ENCODE measurements at regions of chr3 and their contacts with region 1.

Region 1: GRCh38 chr3:18559331-18559842 is 134.2 kb upstream of the SATB1 start:
- DNase-seq: peak; percentile 7 to 48 (median 28)
- H3K4me3 ChIP-seq: peak overlapping the region; percentile 20
- H3K4me3 Mint-ChIP-seq: peak overlapping the region in 5 of 7 donors; percentile 25 to 59 (median 51)
- H3K27ac ChIP-seq: no peak overlapping the region
- H3K27ac Mint-ChIP-seq: peak overlapping the region in 6 of 8 donors; percentile 22 to 88 (median 78)
- H3K4me1 ChIP-seq: peaks cover 34% of the 10 kb centered on the region
- H3K4me1 Mint-ChIP-seq: peaks cover 30 to 61% (median 47%) of the 10 kb centered on the region in 3 donors
- H3K27me3 ChIP-seq: no peaks in the 10 kb centered on the region
- H3K27me3 Mint-ChIP-seq: no peaks in the 10 kb centered on the region

Region 2: DNA sequence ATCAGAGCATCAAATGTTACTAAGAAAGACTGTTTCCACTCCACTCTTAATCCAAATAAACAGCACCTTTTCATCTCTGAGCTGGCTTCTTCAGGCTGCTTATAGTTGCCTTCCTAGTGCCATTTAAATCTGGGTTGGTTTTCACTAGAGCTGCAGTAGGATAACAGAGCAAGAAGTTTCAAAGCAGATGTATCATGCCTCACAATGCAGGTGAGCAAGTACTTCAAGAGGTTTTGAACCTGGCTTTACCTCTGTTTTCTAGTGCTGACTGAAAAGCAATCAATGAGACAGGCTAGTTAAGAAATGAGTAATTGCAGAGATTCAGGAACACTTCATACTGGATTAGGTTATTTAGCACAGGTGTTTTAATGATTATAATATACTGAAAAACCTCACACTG is 13.4 kb after region 1 on chr3:
- CTCF ChIA-PET with region 1: interaction called, 22 read pairs
- POLR2A ChIA-PET with region 1: no interaction called
- DNase-seq: no peak
- H3K4me3 ChIP-seq: no peak overlapping the region
- H3K4me3 Mint-ChIP-seq: no peak overlapping the region
- H3K27ac ChIP-seq: no peak overlapping the region
- H3K27ac Mint-ChIP-seq: no peak overlapping the region
- H3K4me1 ChIP-seq: no peaks in the 10 kb centered on the region
- H3K4me1 Mint-ChIP-seq: peaks cover 0 to 5% (median 5%) of the 10 kb centered on the region in 3 donors
- H3K27me3 ChIP-seq: no peaks in the 10 kb centered on the region
- H3K27me3 Mint-ChIP-seq: peaks cover 0 to 3% of the 10 kb centered on the region in 2 donors

Region 3: DNA sequence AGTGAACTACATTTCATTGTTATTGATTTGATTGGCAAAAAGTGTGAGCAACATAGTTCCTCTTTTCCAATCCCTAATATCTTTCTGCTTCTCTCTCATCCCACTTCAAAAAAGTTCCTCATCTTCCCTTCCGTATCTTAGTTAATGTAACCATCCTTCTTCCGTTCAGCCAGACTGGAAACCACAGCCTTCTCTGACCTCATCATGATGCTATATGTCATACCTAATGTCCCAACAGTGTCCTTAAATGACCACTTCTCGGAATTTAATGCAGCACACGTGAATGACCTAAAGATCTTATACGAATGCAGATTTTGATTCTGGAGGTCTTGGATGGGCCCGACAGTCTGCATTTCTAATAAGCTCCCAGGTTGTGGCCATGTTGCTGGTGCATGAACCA is 186.1 kb after region 1 on chr3:
- CTCF ChIA-PET with region 1: interaction called, 11 read pairs
- POLR2A ChIA-PET with region 1: no interaction called
- DNase-seq: no peak
- H3K4me3 ChIP-seq: no peak overlapping the region
- H3K4me3 Mint-ChIP-seq: peak overlapping the region in 4 of 7 donors; percentile 0 to 74 (median 10)
- H3K27ac ChIP-seq: no peak overlapping the region
- H3K27ac Mint-ChIP-seq: peak overlapping the region in 7 of 8 donors; percentile 47 to 91 (median 76)
- H3K4me1 ChIP-seq: peaks cover 53% of the 10 kb centered on the region
- H3K4me1 Mint-ChIP-seq: peaks cover 53 to 66% (median 64%) of the 10 kb centered on the region in 3 donors
- H3K27me3 ChIP-seq: no peaks in the 10 kb centered on the region
- H3K27me3 Mint-ChIP-seq: no peaks in the 10 kb centered on the region

Region 4: GRCh38 chr3:18751514-18751913 is 192.1 kb after region 1 on chr3:
- CTCF ChIA-PET with region 1: interaction called, 66 read pairs
- POLR2A ChIA-PET with region 1: no interaction called
- DNase-seq: no peak
- H3K4me3 ChIP-seq: no peak overlapping the region
- H3K4me3 Mint-ChIP-seq: no peak overlapping the region
- H3K27ac ChIP-seq: no peak overlapping the region
- H3K27ac Mint-ChIP-seq: no peak overlapping the region
- H3K4me1 ChIP-seq: peaks cover 17% of the 10 kb centered on the region
- H3K4me1 Mint-ChIP-seq: peaks cover 16 to 57% (median 20%) of the 10 kb centered on the region in 3 donors
- H3K27me3 ChIP-seq: no peaks in the 10 kb centered on the region
- H3K27me3 Mint-ChIP-seq: no peaks in the 10 kb centered on the region

Region 5: DNA sequence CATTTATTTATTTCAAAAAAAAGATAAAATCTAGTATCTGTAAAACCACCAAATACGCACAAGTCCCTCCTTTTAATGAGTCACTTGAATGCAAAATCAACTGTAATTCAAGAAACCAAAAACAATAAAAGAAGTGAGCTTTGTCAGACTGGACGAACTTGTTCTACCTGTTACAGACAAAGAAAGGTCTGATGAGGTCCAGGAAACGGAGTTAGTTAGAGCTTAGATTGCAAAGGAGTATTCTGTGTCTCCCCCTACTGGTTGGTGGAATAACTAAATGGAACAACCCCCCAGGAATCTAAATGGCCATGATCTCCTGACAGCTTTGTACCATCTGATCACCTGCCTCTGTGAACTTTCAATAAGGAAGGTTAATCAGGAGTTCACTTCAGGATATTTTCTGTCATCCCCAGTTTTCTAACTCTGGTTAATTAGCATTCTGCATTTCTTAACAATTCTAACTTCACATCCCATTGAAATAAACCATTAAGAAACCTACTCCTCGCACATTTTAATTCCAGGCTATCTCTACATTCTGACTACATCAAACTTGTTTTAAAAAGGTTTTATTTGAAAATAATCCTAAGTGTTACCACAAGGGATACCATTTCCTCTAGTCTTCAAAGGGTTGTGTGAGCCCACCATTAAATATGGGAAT is 198.8 kb after region 1 on chr3:
- CTCF ChIA-PET with region 1: interaction called, 66 read pairs
- POLR2A ChIA-PET with region 1: no interaction called
- DNase-seq: peak in 4 of 5 donors; percentile 8 to 77 (median 60)
- H3K4me3 ChIP-seq: no peak overlapping the region
- H3K4me3 Mint-ChIP-seq: no peak overlapping the region
- H3K27ac ChIP-seq: no peak overlapping the region
- H3K27ac Mint-ChIP-seq: peak overlapping the region; percentile 9 to 81 (median 60)
- H3K4me1 ChIP-seq: peaks cover 17% of the 10 kb centered on the region
- H3K4me1 Mint-ChIP-seq: peaks cover 16 to 40% (median 20%) of the 10 kb centered on the region in 3 donors
- H3K27me3 ChIP-seq: no peaks in the 10 kb centered on the region
- H3K27me3 Mint-ChIP-seq: no peaks in the 10 kb centered on the region

Measured in CD8-positive, alpha-beta memory T cell (primary cell).